RWPE1 (cell line): ENCODE measurements at regions of chr15 and their contacts with region 1.

Region 1: GRCh38 chr15:78308422-78309032 is 9.1 kb upstream of the SKIC8 start:
- DNase-seq: peak; percentile 71
- H3K27ac ChIP-seq: no peak overlapping the region
- CTCF ChIP-seq: peak; percentile 85

Region 2: DNA sequence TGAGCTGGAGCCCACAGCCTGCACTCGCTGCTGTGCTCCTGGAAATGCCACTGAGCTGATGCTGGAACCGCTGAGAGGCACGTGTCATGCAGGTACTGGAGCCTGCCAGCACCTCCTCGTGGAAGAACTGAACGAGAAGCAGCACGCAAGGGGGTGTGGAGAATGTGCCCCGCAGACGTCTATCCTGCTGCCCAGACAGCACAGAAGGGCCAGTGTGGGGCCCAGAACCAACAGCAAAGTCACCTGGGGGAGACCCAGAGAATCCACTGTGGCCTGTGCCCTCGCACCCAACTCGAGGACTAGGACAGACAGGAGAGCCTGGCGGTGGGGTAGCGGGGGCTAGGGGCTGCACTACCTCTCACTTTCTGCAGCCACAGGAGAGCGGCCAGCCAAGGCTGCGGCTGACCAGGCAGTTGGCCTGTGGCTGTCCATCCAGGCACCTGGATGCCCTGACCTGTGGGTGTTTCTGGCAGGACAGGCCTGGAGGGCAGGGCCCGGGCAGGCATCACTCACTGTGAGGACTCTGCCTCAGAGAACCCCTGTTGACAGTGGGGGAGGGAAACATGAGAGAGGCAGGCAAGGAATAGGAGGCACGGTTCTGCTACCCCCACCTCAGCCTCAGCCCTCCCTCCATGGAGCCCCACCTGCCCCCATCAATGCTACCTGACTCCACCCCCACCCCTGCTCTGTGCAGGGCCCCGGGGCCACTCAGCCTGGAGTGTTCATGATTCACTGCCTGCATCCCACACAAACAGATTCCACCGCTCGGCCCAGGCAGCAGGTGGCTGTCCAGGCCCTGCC is 444.0 kb before region 1 on chr15:
- CTCF ChIA-PET with region 1: no interaction called
- POLR2A ChIA-PET with region 1: no interaction called
- DNase-seq: peak; percentile 23
- H3K27ac ChIP-seq: no peak overlapping the region
- CTCF ChIP-seq: no peak

Region 3: GRCh38 chr15:78415286-78415685 is 106.8 kb after region 1 on chr15:
- CTCF ChIA-PET with region 1: interaction called, 27 read pairs
- POLR2A ChIA-PET with region 1: no interaction called
- DNase-seq: peak; percentile 43
- H3K27ac ChIP-seq: no peak overlapping the region
- CTCF ChIP-seq: peak; percentile 26

Region 4: DNA sequence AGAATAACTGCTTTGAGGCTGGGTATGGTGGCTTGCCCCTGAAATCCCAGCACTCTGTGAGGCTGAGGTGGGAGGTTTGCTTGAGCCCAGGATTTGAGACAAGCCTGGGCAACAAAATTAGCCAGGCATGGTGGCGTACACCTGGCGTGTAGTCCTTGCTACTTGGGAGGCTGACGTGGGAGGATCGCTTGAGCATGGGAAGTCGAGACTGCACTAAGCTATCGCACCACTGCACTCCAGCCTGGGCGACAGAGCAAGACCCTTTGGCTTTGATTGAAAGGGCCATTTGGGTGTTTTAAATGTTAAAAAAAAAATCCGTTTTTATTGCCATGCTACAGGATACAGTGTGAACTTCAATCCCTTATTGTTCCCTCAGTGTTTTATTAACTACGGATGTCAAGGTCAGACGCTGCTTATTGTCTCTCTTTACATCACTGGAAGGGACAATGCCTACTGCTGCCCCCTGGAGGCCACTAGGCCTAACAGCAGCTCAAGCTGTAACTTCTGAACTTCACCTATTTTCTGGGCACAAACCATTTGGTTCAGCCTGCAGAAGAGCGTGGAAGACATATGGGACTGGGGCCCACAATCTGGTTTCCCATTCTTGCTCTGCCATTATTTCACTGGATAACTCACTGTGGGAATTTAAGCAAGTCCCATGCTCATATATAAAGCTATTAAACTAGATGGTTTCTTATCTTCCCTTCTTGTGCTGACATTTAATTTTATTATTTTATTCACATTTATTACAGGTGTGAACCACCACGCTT is 114.2 kb after region 1 on chr15:
- CTCF ChIA-PET with region 1: interaction called, 21 read pairs
- POLR2A ChIA-PET with region 1: no interaction called
- DNase-seq: peak; percentile 73
- H3K27ac ChIP-seq: no peak overlapping the region
- CTCF ChIP-seq: peak; percentile 97